GM18951 (cell line): ENCODE measurements at regions of chr3 and their contacts with region 1.

Region 1: GRCh38 chr3:40580494-40581091 is 55.8 kb downstream of the ZNF621 start:
- POLR2A ChIP-seq: no peak

Region 2: DNA sequence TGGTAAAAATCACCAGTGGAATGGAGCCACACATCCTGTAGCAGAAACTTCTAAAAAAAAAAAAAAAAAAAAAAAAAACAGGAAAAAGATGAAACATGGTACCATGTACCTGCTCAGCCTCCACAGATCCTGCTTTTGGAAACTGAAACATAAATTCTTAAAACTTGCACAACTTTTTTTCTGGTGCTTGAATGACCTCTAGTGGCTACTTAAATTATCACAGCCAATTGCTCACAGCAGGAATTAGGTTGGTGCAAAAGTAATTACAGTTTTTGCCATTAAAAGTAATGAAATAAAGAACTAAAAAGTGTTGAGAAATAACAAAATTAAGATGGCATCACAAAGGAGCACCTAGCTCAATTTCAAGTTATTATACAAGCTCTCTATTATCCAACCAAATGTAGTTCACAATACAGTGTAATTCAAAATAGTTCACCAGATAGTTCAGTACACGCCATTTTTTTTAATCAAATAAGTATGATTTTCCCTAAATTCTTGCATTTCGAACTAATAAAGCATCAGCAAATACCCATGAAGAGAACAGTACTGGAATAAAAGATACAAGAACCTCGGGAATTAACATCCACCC is 1300.7 kb after region 1 on chr3:
- in situ Hi-C with region 1: loop called (anchors 10 kb)
- POLR2A ChIP-seq: no peak